Right cardiac atrium (tissue), 5 donors: ENCODE measurements at regions of chr1 and their contacts with region 1.

Region 1: GRCh38 chr1:22332795-22333499 is 118.7 kb upstream of the ZBTB40 start:
- DNase-seq: no peak
- ATAC-seq: no peak
- H3K4me3 ChIP-seq: no peak overlapping the region
- H3K27ac ChIP-seq: no peak overlapping the region
- H3K4me1 ChIP-seq: no peaks in the 10 kb centered on the region
- H3K27me3 ChIP-seq: no peaks in the 10 kb centered on the region

Region 2: DNA sequence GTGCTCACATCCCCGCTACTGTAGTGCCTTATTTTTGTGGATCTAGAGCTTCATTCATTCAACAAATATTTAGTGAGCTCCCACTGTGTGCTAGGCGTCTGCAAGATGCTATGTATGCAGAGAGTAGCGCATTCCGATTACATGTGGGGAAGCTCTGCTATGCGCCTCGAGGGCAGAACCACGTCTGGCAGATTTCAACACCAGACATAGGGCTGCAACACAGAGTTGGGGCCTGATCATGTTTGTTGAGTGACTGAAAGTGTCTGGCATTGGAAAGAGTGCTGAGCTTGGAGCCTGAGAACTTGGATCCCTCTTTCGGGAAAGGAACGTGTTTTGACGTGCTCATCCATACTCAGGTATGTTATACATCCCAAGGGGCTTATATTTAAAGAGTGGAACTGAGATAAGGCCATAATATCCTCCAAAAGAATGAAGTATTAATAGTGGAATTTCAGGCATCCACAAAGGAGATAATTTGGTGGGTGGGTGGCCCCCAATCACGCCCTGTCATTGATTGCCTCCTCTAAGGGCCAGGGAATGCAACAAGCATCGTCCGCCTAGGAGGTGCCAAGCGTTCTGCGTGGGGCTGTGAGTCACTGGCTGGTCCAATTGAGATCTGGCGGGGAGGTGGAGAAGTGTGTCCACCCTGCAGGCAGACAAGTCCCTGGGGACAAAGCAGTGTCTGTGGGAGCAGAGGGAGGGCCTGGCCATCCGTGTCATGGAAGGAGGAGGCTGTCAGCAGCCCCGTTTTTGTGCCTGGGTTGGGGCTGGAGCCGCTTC is 55.9 kb after region 1 on chr1:
- intact Hi-C with region 1: loop called in 1 of 4 experiments (anchors 5 kb)
- DNase-seq: no peak
- ATAC-seq: peak in 1 of 2 donors; percentile 23
- H3K4me3 ChIP-seq: no peak overlapping the region
- H3K27ac ChIP-seq: no peak overlapping the region
- H3K4me1 ChIP-seq: no peaks in the 10 kb centered on the region
- H3K27me3 ChIP-seq: no peaks in the 10 kb centered on the region

Region 3: DNA sequence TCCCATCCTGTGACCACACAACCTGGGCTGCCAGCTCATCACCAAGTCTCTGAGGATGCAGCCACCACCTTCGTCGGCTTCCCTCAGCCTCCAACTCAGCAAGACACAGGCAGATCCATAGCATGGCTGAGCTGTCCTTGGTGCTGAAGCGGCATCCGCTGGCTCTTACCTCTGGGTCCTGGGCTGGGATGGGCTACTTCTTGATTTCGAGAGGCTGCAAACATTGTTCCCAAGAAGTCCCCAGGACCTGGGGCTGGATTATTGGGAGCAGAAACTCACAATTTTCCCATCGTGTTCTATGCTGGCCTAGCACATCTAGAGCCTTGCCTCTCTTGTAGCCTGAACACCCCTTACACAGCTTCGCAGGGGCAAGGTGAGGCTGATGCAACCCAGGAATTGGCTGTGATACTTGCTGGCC is 278.6 kb after region 1 on chr1:
- intact Hi-C with region 1: no loop called
- DNase-seq: peak in 2 of 3 donors; percentile 45 to 84
- ATAC-seq: peak; percentile 31 to 36
- H3K4me3 ChIP-seq: no peak overlapping the region
- H3K27ac ChIP-seq: no peak overlapping the region
- H3K4me1 ChIP-seq: no peaks in the 10 kb centered on the region
- H3K27me3 ChIP-seq: no peaks in the 10 kb centered on the region